CD4-positive, alpha-beta memory T cell (primary cell): ENCODE measurements at regions of chr6 and their contacts with region 1.

Region 1: DNA sequence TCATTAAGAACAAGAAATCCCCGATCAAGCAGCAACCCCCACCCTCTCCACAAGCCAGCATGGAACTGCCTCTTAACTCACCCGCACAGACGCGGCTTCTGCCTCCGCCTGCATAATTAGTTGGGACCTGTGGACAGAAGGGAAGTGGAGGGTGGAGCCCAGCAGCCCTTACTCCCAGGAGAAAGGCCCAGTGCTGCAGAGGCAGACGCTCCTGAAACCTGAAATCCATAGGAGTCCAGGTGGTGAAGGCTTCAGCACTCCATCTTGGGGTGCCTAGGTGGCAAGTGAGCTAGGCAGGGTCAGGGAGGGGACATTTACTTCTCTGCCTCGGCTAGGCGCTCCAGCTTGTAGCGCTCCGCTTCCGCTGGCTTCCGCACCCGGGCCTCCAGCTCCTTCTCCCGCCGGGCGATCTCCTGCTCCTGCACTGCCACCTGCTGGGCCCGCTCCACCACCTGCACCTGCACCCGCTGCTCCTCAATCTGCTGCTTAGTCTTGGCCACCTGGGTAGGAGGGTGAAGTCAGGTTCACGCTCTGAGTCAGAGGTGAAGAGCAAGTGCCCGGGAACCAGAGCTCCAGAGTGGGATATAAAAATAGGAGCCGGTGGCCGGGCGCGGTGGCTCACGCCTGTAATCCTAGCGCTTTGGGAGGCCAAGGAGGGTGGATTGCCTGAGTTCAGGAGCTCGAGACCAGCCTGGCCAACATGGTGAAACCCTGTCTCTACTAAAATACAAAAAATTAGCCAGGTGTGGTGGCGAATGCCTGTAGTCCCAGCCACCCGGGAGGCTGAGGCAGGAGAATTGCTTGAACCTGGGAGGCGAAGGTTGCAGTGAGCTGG is 10.7 kb downstream of the TUBB start:
- DNase-seq: peak; percentile 81 to 86 (median 82)
- H3K4me3 ChIP-seq: peak overlapping the region in 1 of 2 donors; percentile 35
- H3K4me3 Mint-ChIP-seq: peak overlapping the region in 6 of 8 donors; percentile 43 to 72 (median 58)
- H3K27ac ChIP-seq: no peak overlapping the region
- H3K27ac Mint-ChIP-seq: peak overlapping the region in 5 of 7 donors; percentile 69 to 84 (median 73)
- H3K4me1 ChIP-seq: peaks cover 23% of the 10 kb centered on the region
- H3K4me1 Mint-ChIP-seq: peaks cover 16 to 40% (median 31%) of the 10 kb centered on the region in 4 donors
- H3K27me3 ChIP-seq: no peaks in the 10 kb centered on the region
- H3K27me3 Mint-ChIP-seq: no peaks in the 10 kb centered on the region

Region 2: DNA sequence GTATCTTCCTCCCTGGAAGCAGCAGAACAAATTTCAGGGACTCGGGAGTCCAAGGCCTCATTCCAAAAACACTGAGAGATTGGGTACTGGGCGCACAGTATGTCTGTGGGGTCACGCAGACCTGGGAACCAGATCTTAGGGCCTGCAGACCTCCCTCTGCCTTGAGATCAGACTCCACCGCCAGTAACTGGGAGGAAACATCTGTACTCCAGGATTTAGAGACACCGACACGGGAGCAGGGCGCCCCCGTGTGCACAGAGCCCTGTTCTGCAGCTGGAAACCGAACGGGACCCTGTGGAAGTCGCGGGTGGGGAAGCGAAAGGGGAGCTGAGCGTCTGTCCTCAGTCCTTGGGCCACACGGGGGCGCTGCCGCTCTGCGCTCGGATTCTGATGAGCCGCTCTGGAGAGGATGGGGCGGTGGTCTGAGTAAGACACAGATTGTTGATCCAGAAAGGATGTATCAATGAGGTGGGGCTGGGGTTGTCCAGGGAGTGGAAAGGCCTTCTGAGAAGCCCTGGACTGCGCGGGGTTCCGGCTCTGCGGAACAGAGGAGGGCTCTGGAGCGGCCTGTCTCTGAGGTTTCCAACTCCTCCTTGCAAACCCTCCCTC is 277.2 kb before region 1 on chr6:
- CTCF ChIA-PET with region 1: interaction called, 7 read pairs
- POLR2A ChIA-PET with region 1: no interaction called
- intact Hi-C with region 1: loop called (anchors 10 kb)
- DNase-seq: peak; percentile 77 to 84 (median 81)
- H3K4me3 ChIP-seq: peak overlapping the region in 1 of 2 donors; percentile 28
- H3K4me3 Mint-ChIP-seq: peak overlapping the region; percentile 52 to 77 (median 62)
- H3K27ac ChIP-seq: no peak overlapping the region
- H3K27ac Mint-ChIP-seq: peak overlapping the region in 1 of 7 donors; percentile 17
- H3K4me1 ChIP-seq: peaks cover 47% of the 10 kb centered on the region
- H3K4me1 Mint-ChIP-seq: peaks cover 31 to 54% (median 43%) of the 10 kb centered on the region in 4 donors
- H3K27me3 ChIP-seq: peaks cover 80% of the 10 kb centered on the region
- H3K27me3 Mint-ChIP-seq: peaks cover 50 to 56% of the 10 kb centered on the region in 2 donors

Region 3: GRCh38 chr6:30533460-30534294 is 197.1 kb before region 1 on chr6:
- CTCF ChIA-PET with region 1: interaction called, 11 read pairs
- POLR2A ChIA-PET with region 1: interaction called, 3 read pairs
- intact Hi-C with region 1: no loop called
- DNase-seq: peak in 4 of 5 donors; percentile 31 to 52 (median 50)
- H3K4me3 ChIP-seq: no peak overlapping the region
- H3K4me3 Mint-ChIP-seq: peak overlapping the region; percentile 82 to 96 (median 92)
- H3K27ac ChIP-seq: peak overlapping the region; percentile 32
- H3K27ac Mint-ChIP-seq: peak overlapping the region; percentile 85 to 99 (median 95)
- H3K4me1 ChIP-seq: peaks cover 37% of the 10 kb centered on the region
- H3K4me1 Mint-ChIP-seq: peaks cover 25 to 45% (median 35%) of the 10 kb centered on the region in 4 donors
- H3K27me3 ChIP-seq: no peaks in the 10 kb centered on the region
- H3K27me3 Mint-ChIP-seq: no peaks in the 10 kb centered on the region

Region 4: DNA sequence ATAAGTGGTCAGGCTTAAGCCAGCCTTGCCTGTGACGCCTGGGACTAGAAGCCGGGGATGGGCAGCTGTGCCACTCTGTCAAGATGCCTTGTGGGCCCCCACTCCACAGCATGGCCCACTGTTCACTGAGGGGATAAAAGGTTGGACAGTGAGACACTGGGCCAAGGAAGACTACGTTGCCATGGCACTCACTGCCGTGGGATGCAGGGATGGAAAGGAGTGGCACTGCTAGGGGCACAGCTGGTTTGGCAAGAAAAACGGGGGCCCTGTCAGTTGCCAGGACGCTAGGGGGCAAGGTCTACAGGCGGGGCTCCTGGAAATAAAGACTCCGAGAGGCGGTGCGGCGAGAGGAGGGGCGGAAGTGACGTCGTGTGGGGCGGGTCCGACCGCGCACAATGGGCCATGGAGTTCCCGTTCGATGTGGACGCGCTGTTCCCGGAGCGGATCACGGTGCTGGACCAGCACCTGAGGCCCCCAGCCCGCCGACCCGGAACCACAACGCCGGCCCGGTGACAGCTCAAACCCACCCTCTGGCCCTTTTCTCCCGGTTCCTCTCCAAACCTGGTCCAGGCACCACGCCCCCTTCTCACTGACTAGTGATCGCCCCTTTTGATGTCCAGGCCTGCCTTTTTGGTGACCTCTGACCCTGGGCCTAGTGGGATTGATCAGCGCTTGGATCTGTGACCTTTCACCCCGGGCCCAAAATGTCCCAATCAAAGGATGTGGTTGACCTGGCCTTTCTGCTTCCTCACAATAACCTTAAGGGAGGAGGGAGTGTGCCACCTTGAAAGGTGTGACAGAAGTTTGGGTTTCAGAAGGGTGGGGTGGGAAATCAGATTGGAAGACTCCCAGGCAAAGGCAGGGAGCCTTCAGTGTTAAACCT is 104.1 kb before region 1 on chr6 and contains the start of gene ATAT1:
- CTCF ChIA-PET with region 1: interaction called, 12 read pairs
- POLR2A ChIA-PET with region 1: interaction called, 4 read pairs
- intact Hi-C with region 1: no loop called
- DNase-seq: peak; percentile 85 to 94 (median 86)
- H3K4me3 ChIP-seq: peak within 1 kb of the TSS; percentile 5 to 78
- H3K4me3 Mint-ChIP-seq: peak within 1 kb of the TSS; percentile 91 to 95 (median 92)
- H3K27ac ChIP-seq: peak within 1 kb of the TSS; percentile 89
- H3K27ac Mint-ChIP-seq: peak within 1 kb of the TSS; percentile 91 to 99 (median 97)
- H3K4me1 ChIP-seq: peaks cover 14% of the 10 kb centered on the region
- H3K4me1 Mint-ChIP-seq: peaks cover 18 to 30% (median 24%) of the 10 kb centered on the region in 4 donors
- H3K27me3 ChIP-seq: no peaks in the 10 kb centered on the region
- H3K27me3 Mint-ChIP-seq: no peaks in the 10 kb centered on the region
- total RNA-seq, gene ATAT1: 8.3 to 9.4 TPM

Region 5: DNA sequence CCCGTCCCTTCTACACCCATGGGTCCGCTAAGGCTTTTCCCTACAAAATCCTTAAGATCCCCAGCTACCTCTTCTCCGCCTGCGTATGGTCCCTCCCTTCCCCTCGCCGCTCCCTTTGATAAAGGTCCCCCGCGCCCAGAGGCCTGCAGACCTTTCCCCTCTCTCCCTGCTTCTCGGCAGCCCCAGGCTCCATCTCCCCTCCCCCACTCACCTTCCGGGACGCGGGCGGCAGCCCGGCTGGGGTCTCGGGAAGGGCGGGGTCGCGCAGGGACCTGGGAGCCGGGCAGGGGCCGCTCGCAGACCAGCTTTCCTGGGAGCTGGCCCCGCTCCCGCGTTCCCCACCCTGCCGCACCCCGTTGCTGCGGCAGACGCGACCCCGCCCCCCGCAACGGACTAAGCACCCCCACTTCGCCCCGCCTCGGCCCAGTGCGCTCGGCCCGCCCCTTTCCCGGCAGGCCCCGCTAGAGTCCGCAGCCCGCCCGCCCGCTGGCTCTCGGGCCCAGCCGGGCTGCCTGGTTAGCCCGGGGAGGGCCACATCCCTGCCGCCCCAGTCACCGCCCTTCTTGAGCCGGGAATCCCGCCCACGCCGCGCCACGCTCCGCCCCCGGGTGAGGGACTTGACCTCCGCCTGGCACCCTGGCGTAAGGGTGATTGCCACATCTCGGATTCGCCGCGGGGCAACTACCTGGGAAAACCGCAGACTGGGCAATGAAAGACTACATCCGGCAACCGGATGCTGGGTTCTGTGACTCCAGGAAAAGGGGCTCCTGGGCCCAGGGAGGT is 11.7 kb after region 1 on chr6 and contains the start of gene FLOT1:
- CTCF ChIA-PET with region 1: interaction called, 27 read pairs
- POLR2A ChIA-PET with region 1: interaction called, 61 read pairs
- intact Hi-C with region 1: no loop called
- DNase-seq: peak; percentile 67 to 88 (median 68)
- H3K4me3 ChIP-seq: peak within 1 kb of the TSS; percentile 50 to 64
- H3K4me3 Mint-ChIP-seq: peak within 1 kb of the TSS; percentile 87 to 97 (median 91)
- H3K27ac ChIP-seq: peak within 1 kb of the TSS; percentile 63
- H3K27ac Mint-ChIP-seq: peak within 1 kb of the TSS; percentile 84 to 98 (median 93)
- H3K4me1 ChIP-seq: peaks cover 54% of the 10 kb centered on the region
- H3K4me1 Mint-ChIP-seq: peaks cover 44 to 75% (median 59%) of the 10 kb centered on the region in 4 donors
- H3K27me3 ChIP-seq: no peaks in the 10 kb centered on the region
- H3K27me3 Mint-ChIP-seq: no peaks in the 10 kb centered on the region
- total RNA-seq, gene FLOT1: 75.3 to 78.5 TPM

Region 6: DNA sequence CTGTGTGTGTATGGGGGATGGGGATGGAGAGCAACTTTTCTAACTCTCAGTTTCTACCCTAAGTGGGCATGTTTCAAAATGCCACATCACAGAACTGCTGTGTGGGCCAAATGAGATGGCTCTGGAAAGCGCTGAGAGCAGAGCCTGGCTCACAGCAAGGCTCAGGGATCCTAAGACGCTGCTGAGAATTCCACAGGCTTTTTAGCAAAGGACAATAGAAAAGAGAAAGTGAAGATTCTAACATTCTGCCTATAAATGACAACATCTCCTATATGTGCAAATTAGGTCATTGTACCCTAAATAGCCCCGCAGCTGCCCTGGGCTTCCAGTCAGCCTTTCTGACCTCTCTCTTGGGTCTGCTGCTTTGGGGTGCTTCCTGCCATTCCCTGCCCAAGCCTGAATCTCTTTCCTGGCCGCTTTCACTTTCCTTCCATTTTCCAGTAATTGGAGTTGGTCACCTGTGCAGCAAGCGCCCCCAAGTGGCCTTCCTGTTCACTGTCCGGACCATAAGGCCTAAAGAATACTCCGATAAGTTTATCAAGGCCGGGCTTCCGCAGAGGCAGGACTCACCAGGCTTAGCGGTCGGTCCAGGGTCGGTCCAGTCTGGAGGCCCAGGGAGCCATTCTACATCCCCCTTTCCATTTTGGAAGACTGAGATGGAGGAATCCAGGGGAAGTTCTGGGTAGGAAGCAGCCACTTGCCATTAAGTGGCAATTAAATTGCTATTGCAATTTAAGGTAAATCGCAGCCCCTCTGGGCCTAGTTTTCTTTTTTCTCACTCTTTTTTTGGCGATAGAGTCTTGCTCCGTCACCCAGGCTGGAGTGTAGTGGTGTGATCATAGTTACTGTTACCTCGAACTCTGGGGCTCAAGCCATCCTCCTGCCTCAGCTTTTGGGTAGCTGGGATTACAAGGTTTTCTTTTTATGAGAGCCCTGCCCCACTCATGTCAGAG is 146.9 kb after region 1 on chr6:
- CTCF ChIA-PET with region 1: interaction called, 14 read pairs
- POLR2A ChIA-PET with region 1: no interaction called
- intact Hi-C with region 1: loop called (anchors 1 kb)
- DNase-seq: peak; percentile 62 to 71 (median 68)
- H3K4me3 ChIP-seq: peak overlapping the region; percentile 40 to 43
- H3K4me3 Mint-ChIP-seq: peak overlapping the region; percentile 61 to 91 (median 82)
- H3K27ac ChIP-seq: no peak overlapping the region
- H3K27ac Mint-ChIP-seq: peak overlapping the region in 6 of 7 donors; percentile 21 to 91 (median 72)
- H3K4me1 ChIP-seq: peaks cover 10% of the 10 kb centered on the region
- H3K4me1 Mint-ChIP-seq: peaks cover 7 to 27% (median 11%) of the 10 kb centered on the region in 4 donors
- H3K27me3 ChIP-seq: no peaks in the 10 kb centered on the region
- H3K27me3 Mint-ChIP-seq: no peaks in the 10 kb centered on the region

Region 7: DNA sequence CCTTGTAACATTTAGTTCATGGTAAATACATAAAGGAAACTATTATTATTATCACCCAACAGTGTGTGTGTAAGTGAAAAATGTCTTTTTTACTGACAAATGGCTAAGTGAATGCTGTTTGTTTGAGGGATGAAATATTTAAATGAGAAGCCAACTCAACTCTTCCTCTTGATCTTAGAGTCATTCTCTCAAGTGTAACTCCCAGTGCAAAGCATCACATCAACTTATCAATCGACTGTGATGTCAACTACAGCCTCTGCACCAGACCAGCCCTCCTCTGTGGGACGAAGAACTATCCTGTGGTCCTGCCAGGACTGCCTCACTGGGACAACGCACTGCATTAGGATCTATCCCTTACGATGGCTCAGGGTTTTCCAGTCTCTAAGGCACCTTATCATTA is 376.2 kb after region 1 on chr6:
- CTCF ChIA-PET with region 1: no interaction called
- POLR2A ChIA-PET with region 1: no interaction called
- intact Hi-C with region 1: no loop called
- DNase-seq: no peak
- H3K4me3 ChIP-seq: no peak overlapping the region
- H3K4me3 Mint-ChIP-seq: no peak overlapping the region
- H3K27ac ChIP-seq: no peak overlapping the region
- H3K27ac Mint-ChIP-seq: no peak overlapping the region
- H3K4me1 ChIP-seq: no peaks in the 10 kb centered on the region
- H3K4me1 Mint-ChIP-seq: peaks cover 0 to 6% (median 5%) of the 10 kb centered on the region in 4 donors
- H3K27me3 ChIP-seq: no peaks in the 10 kb centered on the region
- H3K27me3 Mint-ChIP-seq: peaks cover 9 to 10% of the 10 kb centered on the region in 2 donors